Left ventricle myocardium inferior (tissue), 1 donor: ENCODE measurements at regions of chr3 and their contacts with region 1.

Region 1: GRCh38 chr3:178436773-178437172 is 99.5 kb upstream of the KCNMB2 start:
- DNase-seq: no peak
- H3K4me3 ChIP-seq: no peak overlapping the region
- H3K27ac ChIP-seq: no peak overlapping the region
- H3K4me1 ChIP-seq: peaks cover 14% of the 10 kb centered on the region
- H3K27me3 ChIP-seq: no peaks in the 10 kb centered on the region
- CTCF ChIP-seq: peak; percentile 69

Region 2: DNA sequence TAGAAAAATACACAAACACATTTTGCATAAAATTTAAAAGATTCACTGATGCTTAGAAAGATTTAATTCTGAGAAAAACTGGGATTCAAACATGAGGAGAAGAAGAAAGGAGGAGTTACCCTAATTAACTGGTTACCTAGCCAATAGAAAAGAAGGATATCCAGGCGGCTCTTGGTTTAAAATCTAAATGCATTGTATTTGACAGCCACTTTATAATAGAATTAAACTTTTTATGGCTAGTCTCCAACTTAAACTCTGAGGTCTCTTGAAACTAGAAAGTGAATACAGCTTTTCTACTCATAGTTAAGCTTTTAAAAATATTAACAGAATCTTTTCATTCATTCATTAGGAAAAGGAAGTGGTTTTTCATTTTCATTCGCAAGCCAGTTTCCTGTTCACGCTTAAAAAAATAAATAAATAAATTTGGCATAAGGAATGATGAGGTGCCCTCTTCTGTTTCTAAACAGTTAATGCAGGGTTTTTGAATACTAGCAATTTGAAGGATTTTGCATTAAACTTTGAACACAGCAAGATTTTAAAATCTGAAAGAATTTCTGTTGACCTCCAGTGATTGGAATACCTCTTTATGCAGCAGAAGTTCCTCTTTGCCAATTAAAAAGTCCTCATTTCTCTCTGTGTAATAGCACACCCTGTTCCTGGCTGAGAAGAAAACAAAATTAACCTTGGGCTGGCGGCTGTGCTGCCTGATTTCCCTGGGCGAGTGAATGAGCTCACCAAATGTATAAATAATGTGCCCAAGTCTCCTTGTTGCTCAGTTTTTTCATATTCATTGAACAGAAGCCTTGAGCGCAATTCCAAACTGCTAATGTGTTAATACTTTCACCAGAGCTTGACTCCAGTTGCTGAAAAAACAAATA is 529.8 kb after region 1 on chr3:
- intact Hi-C with region 1: loop called (anchors 10 kb)
- DNase-seq: peak; percentile 12
- H3K4me3 ChIP-seq: peak overlapping the region; percentile 40
- H3K27ac ChIP-seq: peak overlapping the region; percentile 12
- H3K4me1 ChIP-seq: peaks cover 18% of the 10 kb centered on the region
- H3K27me3 ChIP-seq: no peaks in the 10 kb centered on the region
- CTCF ChIP-seq: peak; percentile 64